ENCODE measurements at regions of chr1 and their contacts with region 1.

Region 1: DNA sequence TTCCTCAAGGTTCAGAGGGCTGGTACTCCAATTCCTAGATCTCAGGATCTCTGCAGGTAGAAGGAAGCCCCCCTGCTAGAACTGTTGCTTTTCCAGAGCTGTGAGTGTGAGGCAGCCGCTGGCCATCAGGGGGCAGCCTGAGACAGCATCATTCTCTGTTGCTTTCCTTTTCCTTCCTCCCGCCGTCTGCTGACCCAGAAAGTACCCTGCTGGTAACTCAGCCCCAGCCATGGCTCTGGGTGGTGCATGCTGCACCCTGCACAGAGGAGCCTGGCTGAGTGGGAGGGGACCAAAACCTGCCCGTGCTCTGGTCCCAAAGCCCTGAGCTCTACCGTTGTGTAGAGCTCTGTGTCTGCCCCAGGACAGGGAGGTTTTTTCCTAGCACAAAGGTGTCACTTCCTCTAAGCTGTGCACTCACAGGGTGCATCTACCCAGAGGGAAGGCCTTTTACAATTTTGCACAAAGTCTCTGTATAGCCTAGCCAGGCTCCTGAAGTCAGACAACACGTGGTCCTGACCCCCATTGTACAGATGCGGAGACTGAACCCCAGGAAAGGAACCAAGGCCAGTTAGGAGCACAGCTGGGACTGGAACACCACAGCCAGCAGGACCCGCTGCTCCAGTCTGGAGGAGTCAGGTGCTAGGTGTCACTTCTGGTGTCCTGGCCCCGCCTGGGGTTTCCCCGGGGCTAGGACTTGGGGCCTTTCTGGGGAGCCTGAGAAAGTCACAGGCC is 5.6 kb upstream of the FAM131C start:
- DNase-seq: peak; percentile 69
- H3K4me3 Mint-ChIP-seq: peak overlapping the region; percentile 69
- H3K27ac Mint-ChIP-seq: peak overlapping the region; percentile 84
- H3K4me1 Mint-ChIP-seq: peaks cover 13% of the 10 kb centered on the region
- H3K27me3 Mint-ChIP-seq: peaks cover 4% of the 10 kb centered on the region

Region 2: GRCh38 chr1:15736038-15736889 is 342.8 kb before region 1 on chr1 and contains the start of gene SLC25A34:
- intact Hi-C with region 1: no loop called
- DNase-seq: no peak
- H3K4me3 Mint-ChIP-seq: no peak within 1 kb of the TSS
- H3K27ac Mint-ChIP-seq: no peak within 1 kb of the TSS
- H3K4me1 Mint-ChIP-seq: peaks cover 2% of the 10 kb centered on the region
- H3K27me3 Mint-ChIP-seq: no peaks in the 10 kb centered on the region
- total RNA-seq, gene SLC25A34: 1.1 and 1.8 TPM in 2 replicates

Region 3: DNA sequence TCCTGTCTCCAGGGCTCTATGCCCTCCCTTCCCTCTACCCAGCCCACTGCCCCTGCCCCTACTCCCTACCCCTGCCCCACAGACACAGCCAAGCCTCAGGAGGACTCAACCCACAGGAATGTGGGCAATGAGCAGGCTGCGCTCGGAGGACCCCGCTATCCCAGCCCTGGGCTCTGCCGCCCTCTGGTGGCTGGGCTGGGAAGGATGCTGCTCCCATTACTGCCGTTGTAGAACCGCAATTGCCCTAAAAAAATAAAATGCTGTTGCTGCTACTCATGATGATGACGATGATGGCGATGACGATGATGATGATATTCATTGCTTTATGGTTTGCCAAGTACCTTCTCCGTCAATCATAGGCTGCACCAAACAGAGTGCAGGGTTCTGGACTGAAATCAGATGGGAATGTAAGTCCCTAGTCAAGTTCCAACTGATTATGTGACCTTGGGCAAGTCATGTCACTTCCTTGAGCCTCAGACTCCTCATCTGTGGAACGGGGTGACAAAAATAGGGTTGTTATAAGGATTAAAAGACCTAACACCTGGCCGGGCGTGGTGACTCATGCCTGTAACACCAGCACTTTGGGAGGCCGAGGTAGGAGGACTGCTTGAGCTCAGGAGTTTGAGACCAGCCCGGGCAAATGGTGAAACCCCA is 108.8 kb after region 1 on chr1:
- intact Hi-C with region 1: loop called (anchors 1 kb)
- DNase-seq: peak; percentile 63
- H3K4me3 Mint-ChIP-seq: no peak overlapping the region
- H3K27ac Mint-ChIP-seq: no peak overlapping the region
- H3K4me1 Mint-ChIP-seq: no peaks in the 10 kb centered on the region
- H3K27me3 Mint-ChIP-seq: peaks cover 9% of the 10 kb centered on the region

Region 4: DNA sequence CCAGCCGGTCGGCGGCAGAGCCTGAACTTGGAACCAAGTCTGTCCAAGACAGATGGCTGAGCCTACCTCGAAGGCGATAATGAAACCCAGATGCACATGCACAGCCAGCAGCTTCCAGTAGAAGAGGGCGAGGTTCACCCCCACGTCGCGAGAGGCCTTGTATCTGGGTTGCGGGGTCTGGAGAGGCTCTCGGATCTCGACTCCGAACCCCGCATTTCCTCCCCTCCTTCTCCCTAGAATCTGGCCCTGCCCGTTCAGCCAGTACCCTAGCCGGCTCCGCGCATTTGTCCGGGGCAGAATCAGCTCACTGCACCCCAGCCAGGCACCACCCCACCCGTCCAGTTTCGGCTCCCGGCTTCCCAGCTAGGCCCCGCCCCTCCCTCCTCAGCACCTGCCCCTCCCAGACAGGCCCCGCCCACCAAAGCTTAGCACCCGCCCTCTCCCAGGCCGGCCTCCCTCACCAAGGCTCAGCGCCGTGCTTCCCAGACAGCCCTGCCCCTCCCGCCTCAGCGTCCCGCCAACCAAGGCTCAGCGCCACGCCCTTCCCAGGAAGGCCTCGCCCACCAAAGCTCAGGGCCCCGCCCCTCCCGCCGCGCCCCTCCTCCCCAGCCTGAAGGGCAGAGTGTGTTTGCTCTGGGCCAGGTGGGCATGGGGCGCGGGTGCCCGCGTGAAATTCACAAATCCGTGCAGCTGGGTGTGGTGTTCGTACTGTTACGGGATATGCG is 138.1 kb after region 1 on chr1:
- intact Hi-C with region 1: no loop called
- DNase-seq: peak; percentile 92
- H3K4me3 Mint-ChIP-seq: peak overlapping the region; percentile 83
- H3K27ac Mint-ChIP-seq: no peak overlapping the region
- H3K4me1 Mint-ChIP-seq: peaks cover 22% of the 10 kb centered on the region
- H3K27me3 Mint-ChIP-seq: peaks cover 4% of the 10 kb centered on the region

Region 5: GRCh38 chr1:16243936-16244649 is 165.0 kb after region 1 on chr1:
- intact Hi-C with region 1: loop called (anchors 1 kb)
- DNase-seq: peak; percentile 64
- H3K4me3 Mint-ChIP-seq: no peak overlapping the region
- H3K27ac Mint-ChIP-seq: no peak overlapping the region
- H3K4me1 Mint-ChIP-seq: peaks cover 10% of the 10 kb centered on the region
- H3K27me3 Mint-ChIP-seq: no peaks in the 10 kb centered on the region